Activated naive CD4-positive, alpha-beta T cell treated with anti-CD3 and anti-CD28 coated beads for 36 hours (primary cell): ENCODE measurements at regions of chr4 and their contacts with region 1.

Region 1: GRCh38 chr4:119628308-119629141 is at the start of gene PDE5A:
- DNase-seq: peak; percentile 83
- H3K4me3 Mint-ChIP-seq: peak within 1 kb of the TSS; percentile 78
- H3K27ac Mint-ChIP-seq: no peak within 1 kb of the TSS
- H3K4me1 Mint-ChIP-seq: peaks cover 15% of the 10 kb centered on the region
- H3K27me3 Mint-ChIP-seq: peaks cover 11% of the 10 kb centered on the region
- total RNA-seq, gene PDE5A: 0.41 to 0.44 TPM

Region 2: GRCh38 chr4:119041951-119042560 is 586.5 kb before region 1 on chr4:
- CTCF ChIA-PET with region 1: interaction called, 3 read pairs
- intact Hi-C with region 1: loop called (anchors 5 kb)
- DNase-seq: peak; percentile 75
- H3K4me3 Mint-ChIP-seq: no peak overlapping the region
- H3K27ac Mint-ChIP-seq: no peak overlapping the region
- H3K4me1 Mint-ChIP-seq: peaks cover 13% of the 10 kb centered on the region
- H3K27me3 Mint-ChIP-seq: no peaks in the 10 kb centered on the region

Region 3: DNA sequence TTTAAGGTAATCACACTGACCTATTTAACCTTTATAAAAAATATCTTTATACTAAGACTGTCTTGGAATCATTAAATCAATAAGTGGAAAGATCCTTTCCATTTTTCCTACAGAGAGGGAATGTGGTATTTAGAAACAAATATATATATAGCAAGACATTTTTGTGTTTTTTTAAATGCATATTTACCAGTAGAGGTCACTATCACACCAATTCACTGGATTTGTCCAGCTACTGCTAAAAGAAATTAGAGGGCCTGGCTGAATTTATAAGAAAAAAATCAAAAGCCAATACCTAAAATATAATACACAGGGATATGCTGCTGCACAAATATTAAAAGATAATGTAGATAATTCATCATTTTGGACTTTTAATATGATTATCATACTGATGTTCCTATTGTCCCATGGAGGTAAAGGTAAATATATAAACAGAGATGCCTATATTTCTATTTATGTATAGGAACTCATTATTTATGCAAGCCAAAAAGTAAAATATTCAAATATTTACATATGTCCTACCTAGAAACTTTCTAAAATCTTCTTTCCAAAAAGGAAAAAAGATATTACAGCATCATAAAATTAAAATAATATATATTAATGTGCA is 69.4 kb before region 1 on chr4:
- CTCF ChIA-PET with region 1: interaction called, 22 read pairs
- intact Hi-C with region 1: loop called (anchors 1 kb)
- DNase-seq: no peak
- H3K4me3 Mint-ChIP-seq: no peak overlapping the region
- H3K27ac Mint-ChIP-seq: no peak overlapping the region
- H3K4me1 Mint-ChIP-seq: no peaks in the 10 kb centered on the region
- H3K27me3 Mint-ChIP-seq: no peaks in the 10 kb centered on the region

Region 4: DNA sequence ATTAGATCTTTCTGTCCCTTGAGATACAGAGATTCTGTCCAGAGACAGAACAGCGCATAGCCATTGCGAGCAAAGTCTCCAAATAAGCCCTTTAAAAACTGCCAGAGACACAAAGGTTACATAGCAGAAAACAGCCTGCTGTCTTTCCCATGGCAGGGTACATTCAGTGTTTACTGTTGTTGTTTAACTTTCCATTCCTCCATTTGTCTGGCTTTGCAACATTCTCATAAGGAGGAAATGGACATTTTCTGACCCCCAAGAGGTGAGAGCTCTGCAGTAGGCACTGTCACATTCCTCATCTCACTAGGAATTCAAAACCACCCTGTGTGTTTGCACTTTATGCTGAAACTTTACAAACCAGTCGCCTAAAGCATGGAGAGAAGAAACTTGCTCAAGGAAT is 48.2 kb before region 1 on chr4:
- CTCF ChIA-PET with region 1: no interaction called
- intact Hi-C with region 1: no loop called
- DNase-seq: no peak
- H3K4me3 Mint-ChIP-seq: no peak overlapping the region
- H3K27ac Mint-ChIP-seq: no peak overlapping the region
- H3K4me1 Mint-ChIP-seq: no peaks in the 10 kb centered on the region
- H3K27me3 Mint-ChIP-seq: peaks cover 1% of the 10 kb centered on the region

Region 5: DNA sequence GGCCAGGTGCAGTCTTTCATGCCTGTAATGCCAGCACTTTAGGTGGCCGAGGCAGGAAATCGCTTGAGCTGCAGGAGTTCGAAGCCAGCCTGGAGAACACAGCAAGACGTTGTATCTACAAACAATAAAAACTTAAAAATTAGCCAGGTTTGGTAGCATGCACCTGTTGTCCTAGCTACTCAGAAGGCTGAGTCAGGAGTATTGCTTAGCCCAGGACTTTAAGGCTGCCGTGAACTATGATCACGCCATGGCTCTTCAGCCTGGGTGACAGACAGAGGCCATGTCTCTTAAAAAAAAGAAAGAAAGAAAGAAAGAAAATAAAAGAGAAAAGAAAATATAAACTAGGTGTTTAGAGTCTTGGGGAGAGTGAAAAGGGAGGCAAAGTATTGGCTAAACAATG is 96.5 kb after region 1 on chr4:
- CTCF ChIA-PET with region 1: no interaction called
- intact Hi-C with region 1: no loop called
- DNase-seq: no peak
- H3K4me3 Mint-ChIP-seq: no peak overlapping the region
- H3K27ac Mint-ChIP-seq: no peak overlapping the region
- H3K4me1 Mint-ChIP-seq: no peaks in the 10 kb centered on the region
- H3K27me3 Mint-ChIP-seq: no peaks in the 10 kb centered on the region

Region 6: GRCh38 chr4:119735165-119735651 is 106.7 kb after region 1 on chr4:
- CTCF ChIA-PET with region 1: interaction called, 10 read pairs
- intact Hi-C with region 1: no loop called
- DNase-seq: no peak
- H3K4me3 Mint-ChIP-seq: no peak overlapping the region
- H3K27ac Mint-ChIP-seq: no peak overlapping the region
- H3K4me1 Mint-ChIP-seq: no peaks in the 10 kb centered on the region
- H3K27me3 Mint-ChIP-seq: peaks cover 2% of the 10 kb centered on the region

Region 7: GRCh38 chr4:120049732-120050494 is 421.4 kb after region 1 on chr4:
- CTCF ChIA-PET with region 1: interaction called, 12 read pairs
- intact Hi-C with region 1: loop called (anchors 1 kb)
- DNase-seq: peak; percentile 82
- H3K4me3 Mint-ChIP-seq: no peak overlapping the region
- H3K27ac Mint-ChIP-seq: no peak overlapping the region
- H3K4me1 Mint-ChIP-seq: peaks cover 2% of the 10 kb centered on the region
- H3K27me3 Mint-ChIP-seq: no peaks in the 10 kb centered on the region